ENCODE measurements at regions of chrX and their contacts with region 1.

Region 1: GRCh38 chrX:47560831-47561652 is at the start of gene ARAF:
- DNase-seq: peak; percentile 92 to 98
- ATAC-seq: peak; percentile 93 to 96 (median 95)
- H3K4me3 ChIP-seq: peak within 1 kb of the TSS; percentile 41 to 77 (median 68)
- H3K27ac ChIP-seq: peak within 1 kb of the TSS; percentile 90 to 99 (median 96)
- H3K4me1 ChIP-seq: peaks cover 0 to 40% (median 10%) of the 10 kb centered on the region in 9 donors
- H3K27me3 ChIP-seq: no peaks in the 10 kb centered on the region
- CTCF ChIP-seq: no peak
- total RNA-seq, gene ARAF: 73.0 to 93.1 (median 79.8) TPM

Region 2: GRCh38 chrX:47456080-47456479 is 105.0 kb before region 1 on chrX:
- intact Hi-C with region 1: no loop called
- DNase-seq: peak; percentile 4 to 22
- ATAC-seq: peak in 7 of 8 donors; percentile 35 to 85 (median 66)
- H3K4me3 ChIP-seq: no peak overlapping the region
- H3K27ac ChIP-seq: no peak overlapping the region
- H3K4me1 ChIP-seq: no peaks in the 10 kb centered on the region
- H3K27me3 ChIP-seq: no peaks in the 10 kb centered on the region
- CTCF ChIP-seq: no peak

Region 3: DNA sequence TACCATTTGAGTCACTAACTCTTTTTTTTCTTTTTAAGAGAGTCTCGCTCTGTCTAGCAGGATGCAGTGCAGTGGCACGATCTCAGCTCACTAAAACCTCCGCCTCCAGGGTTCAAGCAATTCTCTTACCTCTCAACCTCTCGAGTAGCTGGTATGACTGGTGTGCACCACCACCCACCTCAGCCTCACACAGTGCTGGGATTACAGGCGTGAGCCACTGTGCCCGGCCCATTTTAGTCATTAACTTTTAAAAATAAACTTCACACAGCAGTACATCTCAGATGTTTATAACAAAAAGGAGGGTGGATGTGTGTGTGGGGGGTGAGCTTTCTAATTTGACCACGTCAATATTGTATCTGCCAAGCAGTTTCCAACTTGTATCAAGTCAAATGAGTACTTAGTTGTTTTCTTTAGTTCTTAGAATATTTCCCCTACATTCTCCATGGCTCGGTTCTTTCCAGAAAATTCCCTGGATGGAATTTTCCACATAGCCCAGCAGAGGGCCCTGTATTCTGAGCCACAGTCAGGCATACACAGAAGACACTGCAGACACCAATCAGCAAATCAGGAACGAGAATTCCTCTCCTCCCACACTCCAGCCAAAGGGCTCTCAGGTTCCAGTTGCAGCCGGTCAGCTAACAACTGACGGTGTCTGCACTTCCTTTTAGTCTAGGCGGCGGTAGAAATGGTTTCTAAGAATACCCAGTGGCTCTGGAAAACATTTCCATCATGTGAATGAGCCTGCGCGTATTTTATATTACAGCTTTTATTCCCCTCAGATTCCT is 20.1 kb before region 1 on chrX:
- intact Hi-C with region 1: loop called in 1 of 10 experiments (anchors 2 kb)
- DNase-seq: peak; percentile 39 to 85
- ATAC-seq: peak; percentile 93 to 99 (median 99)
- H3K4me3 ChIP-seq: peak overlapping the region in 1 of 10 donors; percentile 12
- H3K27ac ChIP-seq: peak overlapping the region; percentile 34 to 86 (median 73)
- H3K4me1 ChIP-seq: peaks cover 0 to 25% (median 9%) of the 10 kb centered on the region in 9 donors
- H3K27me3 ChIP-seq: peaks cover 0 to 4% (median 0%) of the 10 kb centered on the region in 7 donors
- CTCF ChIP-seq: peak; percentile 22 to 72 (median 59)

Region 4: GRCh38 chrX:47637546-47638195 is 76.6 kb after region 1 on chrX:
- intact Hi-C with region 1: loop called in 6 of 10 experiments (anchors 5 to 10 kb)
- DNase-seq: peak; percentile 32 to 37
- ATAC-seq: peak; percentile 45 to 88 (median 76)
- H3K4me3 ChIP-seq: peak overlapping the region in 6 of 10 donors; percentile 20 to 46 (median 30)
- H3K27ac ChIP-seq: peak overlapping the region in 1 of 10 donors; percentile 74
- H3K4me1 ChIP-seq: peaks cover 0 to 1% (median 0%) of the 10 kb centered on the region in 9 donors
- H3K27me3 ChIP-seq: no peaks in the 10 kb centered on the region
- CTCF ChIP-seq: peak in 2 of 9 donors; percentile 22 to 27

Region 5: DNA sequence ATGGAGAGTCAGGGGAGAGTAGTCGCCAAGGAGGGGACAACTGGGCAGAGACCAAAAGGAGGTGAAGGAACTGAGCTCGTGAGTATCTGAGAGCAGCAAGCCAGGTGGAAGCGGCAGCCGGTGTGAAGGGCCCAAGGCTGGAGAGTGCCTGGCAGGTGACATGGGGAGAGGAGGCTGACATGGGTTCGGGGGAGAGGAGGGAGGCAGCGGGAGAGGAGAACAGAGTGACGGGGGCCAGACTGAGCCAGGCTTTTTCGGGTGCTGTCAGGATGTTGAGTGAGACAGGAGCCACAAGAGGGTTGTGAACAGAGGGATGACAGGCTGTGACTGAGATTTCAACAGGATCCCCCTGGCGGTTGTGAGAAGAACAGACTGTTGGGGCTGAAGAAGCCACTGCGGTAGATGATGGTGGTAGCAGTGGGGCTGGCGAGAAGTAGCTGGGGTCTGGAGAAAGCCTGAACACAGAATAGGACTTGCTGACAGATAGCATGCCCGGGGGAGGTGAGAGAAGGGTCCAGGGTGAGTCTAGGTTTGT is 83.6 kb after region 1 on chrX:
- intact Hi-C with region 1: loop called in 7 of 10 experiments (anchors 5 to 10 kb)
- DNase-seq: no peak
- ATAC-seq: peak; percentile 42 to 88 (median 75)
- H3K4me3 ChIP-seq: no peak overlapping the region
- H3K27ac ChIP-seq: peak overlapping the region in 1 of 10 donors; percentile 22
- H3K4me1 ChIP-seq: peaks cover 0 to 32% (median 10%) of the 10 kb centered on the region in 9 donors
- H3K27me3 ChIP-seq: no peaks in the 10 kb centered on the region
- CTCF ChIP-seq: peak in 7 of 9 donors; percentile 29 to 51 (median 40)

Region 6: GRCh38 chrX:47831788-47832187 is 270.7 kb after region 1 on chrX:
- intact Hi-C with region 1: no loop called
- DNase-seq: peak; percentile 12 to 26
- ATAC-seq: no peak
- H3K4me3 ChIP-seq: no peak overlapping the region
- H3K27ac ChIP-seq: no peak overlapping the region
- H3K4me1 ChIP-seq: peaks cover 0 to 9% (median 0%) of the 10 kb centered on the region in 9 donors
- H3K27me3 ChIP-seq: no peaks in the 10 kb centered on the region
- CTCF ChIP-seq: peak; percentile 14 to 69 (median 55)

Measured in heart right ventricle (tissue), 16 donors.